Activated CD8-positive, alpha-beta T cell treated with anti-CD3 and anti-CD28 coated beads for 36 hours (primary cell): ENCODE measurements at regions of chr12 and their contacts with region 1.

Region 1: DNA sequence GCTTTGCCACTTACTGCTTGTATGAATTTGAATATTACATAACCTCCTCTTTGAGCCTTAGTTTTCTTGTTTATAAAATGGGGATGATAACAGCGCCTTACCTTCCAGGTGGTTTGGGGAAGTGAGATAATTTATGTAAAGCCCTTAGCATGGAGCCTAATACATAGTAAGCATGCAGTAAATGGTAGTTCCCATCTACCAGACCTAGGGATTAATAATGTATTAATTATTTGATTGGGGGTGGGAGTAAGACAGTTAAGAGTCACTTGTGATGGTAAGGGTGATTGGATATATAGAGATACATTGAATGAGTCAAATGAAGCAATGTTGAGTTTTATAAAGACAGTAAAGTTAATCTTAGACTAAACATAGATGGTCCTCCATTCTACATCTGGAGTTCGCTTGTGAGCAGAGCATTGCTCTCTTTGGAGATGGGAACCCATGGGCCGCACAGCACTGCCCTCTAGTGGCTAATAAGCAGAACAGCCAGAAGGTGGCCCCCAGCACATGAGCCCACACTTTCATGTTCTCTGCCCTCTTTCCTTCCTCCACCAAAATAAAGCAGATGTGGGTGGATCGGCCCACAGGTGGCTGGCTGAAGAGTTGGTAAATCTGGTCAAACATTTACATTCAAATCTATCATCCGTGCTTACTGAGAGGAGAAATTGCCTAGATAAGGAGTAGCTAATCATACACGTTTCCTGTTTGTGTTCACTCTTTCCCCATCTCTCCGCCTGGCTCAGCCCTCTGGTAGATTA is 26.5 kb upstream of the TAMALIN start:
- DNase-seq: peak; percentile 81
- ATAC-seq: peak; percentile 99
- H3K4me3 Mint-ChIP-seq: no peak overlapping the region
- H3K27ac Mint-ChIP-seq: peak overlapping the region; percentile 68
- H3K4me1 Mint-ChIP-seq: peaks cover 28% of the 10 kb centered on the region
- H3K27me3 Mint-ChIP-seq: no peaks in the 10 kb centered on the region
- CTCF ChIP-seq: peak; percentile 97

Region 2: GRCh38 chr12:51760221-51760620 is 220.0 kb before region 1 on chr12:
- CTCF ChIA-PET with region 1: no interaction called
- POLR2A ChIA-PET with region 1: no interaction called
- intact Hi-C with region 1: no loop called
- DNase-seq: no peak
- ATAC-seq: no peak
- H3K4me3 Mint-ChIP-seq: no peak overlapping the region
- H3K27ac Mint-ChIP-seq: no peak overlapping the region
- H3K4me1 Mint-ChIP-seq: no peaks in the 10 kb centered on the region
- H3K27me3 Mint-ChIP-seq: no peaks in the 10 kb centered on the region
- CTCF ChIP-seq: no peak

Region 3: DNA sequence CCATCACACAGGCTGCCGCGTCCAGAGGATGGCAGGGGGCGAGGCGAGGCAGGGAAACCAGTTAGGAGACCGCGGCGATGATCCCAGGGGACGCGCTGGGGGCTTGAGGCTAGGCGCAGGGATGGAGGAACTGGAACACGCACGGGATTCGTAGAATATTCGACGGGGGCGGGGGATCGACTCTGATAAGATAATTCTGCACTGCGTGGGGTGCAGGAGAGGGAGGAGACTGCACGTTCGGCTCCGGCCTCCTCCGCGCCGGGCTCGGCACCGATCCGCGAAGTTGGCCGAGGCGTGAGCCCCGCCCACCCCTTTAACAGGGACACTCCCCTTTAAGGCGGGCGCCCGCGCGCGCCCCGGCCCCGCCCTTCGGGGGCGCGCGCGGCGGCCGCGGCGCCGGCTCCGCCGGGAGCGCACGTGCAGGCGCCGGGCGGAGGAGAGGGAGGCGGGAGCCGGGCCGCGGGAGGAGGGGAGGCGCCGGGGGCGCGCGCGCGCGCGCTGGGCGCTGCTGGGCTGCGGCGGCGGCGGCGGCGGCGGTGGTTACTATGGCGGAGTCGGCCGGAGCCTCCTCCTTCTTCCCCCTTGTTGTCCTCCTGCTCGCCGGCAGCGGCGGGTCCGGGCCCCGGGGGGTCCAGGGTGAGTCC is 28.9 kb before region 1 on chr12 and contains the start of gene ACVR1B:
- CTCF ChIA-PET with region 1: interaction called, 15 read pairs
- POLR2A ChIA-PET with region 1: interaction called, 3 read pairs
- intact Hi-C with region 1: no loop called
- DNase-seq: peak; percentile 92
- ATAC-seq: peak; percentile 97
- H3K4me3 Mint-ChIP-seq: peak within 1 kb of the TSS; percentile 86
- H3K27ac Mint-ChIP-seq: peak within 1 kb of the TSS; percentile 69
- H3K4me1 Mint-ChIP-seq: peaks cover 35% of the 10 kb centered on the region
- H3K27me3 Mint-ChIP-seq: peaks cover 8% of the 10 kb centered on the region
- CTCF ChIP-seq: no peak
- total RNA-seq, gene ACVR1B: 7.5 to 8.6 TPM

Region 4: GRCh38 chr12:51994959-51995358 is 14.7 kb after region 1 on chr12:
- CTCF ChIA-PET with region 1: interaction called, 14 read pairs
- POLR2A ChIA-PET with region 1: no interaction called
- intact Hi-C with region 1: no loop called
- DNase-seq: no peak
- ATAC-seq: no peak
- H3K4me3 Mint-ChIP-seq: no peak overlapping the region
- H3K27ac Mint-ChIP-seq: no peak overlapping the region
- H3K4me1 Mint-ChIP-seq: peaks cover 12% of the 10 kb centered on the region
- H3K27me3 Mint-ChIP-seq: no peaks in the 10 kb centered on the region
- CTCF ChIP-seq: no peak

Region 5: GRCh38 chr12:52004042-52004648 is 23.9 kb after region 1 on chr12:
- CTCF ChIA-PET with region 1: interaction called, 13 read pairs
- POLR2A ChIA-PET with region 1: interaction called, 4 read pairs
- intact Hi-C with region 1: no loop called
- DNase-seq: peak; percentile 28
- ATAC-seq: no peak
- H3K4me3 Mint-ChIP-seq: no peak overlapping the region
- H3K27ac Mint-ChIP-seq: no peak overlapping the region
- H3K4me1 Mint-ChIP-seq: peaks cover 20% of the 10 kb centered on the region
- H3K27me3 Mint-ChIP-seq: peaks cover 9% of the 10 kb centered on the region
- CTCF ChIP-seq: peak; percentile 44

Region 6: GRCh38 chr12:52924764-52925716 is 944.8 kb after region 1 on chr12:
- CTCF ChIA-PET with region 1: no interaction called
- POLR2A ChIA-PET with region 1: no interaction called
- intact Hi-C with region 1: no loop called
- DNase-seq: no peak
- ATAC-seq: no peak
- H3K4me3 Mint-ChIP-seq: no peak overlapping the region
- H3K27ac Mint-ChIP-seq: no peak overlapping the region
- H3K4me1 Mint-ChIP-seq: peaks cover 6% of the 10 kb centered on the region
- H3K27me3 Mint-ChIP-seq: peaks cover 2% of the 10 kb centered on the region
- CTCF ChIP-seq: no peak